ENCODE measurements at regions of chr11 and their contacts with region 1.

Region 1: GRCh38 chr11:97461934-97462333 is 1072.1 kb downstream of the JRKL start:
- DNase-seq: peak in 1 of 10 donors; percentile 21
- H3K4me3 ChIP-seq: no peak overlapping the region
- H3K27ac ChIP-seq: no peak overlapping the region
- H3K27me3 ChIP-seq: no peaks in the 10 kb centered on the region
- CTCF ChIP-seq: no peak

Region 2: GRCh38 chr11:97502201-97502600 is 40.3 kb after region 1 on chr11:
- intact Hi-C with region 1: no loop called
- DNase-seq: no peak
- H3K4me3 ChIP-seq: no peak overlapping the region
- H3K27ac ChIP-seq: no peak overlapping the region
- H3K27me3 ChIP-seq: no peaks in the 10 kb centered on the region
- CTCF ChIP-seq: no peak

Region 3: DNA sequence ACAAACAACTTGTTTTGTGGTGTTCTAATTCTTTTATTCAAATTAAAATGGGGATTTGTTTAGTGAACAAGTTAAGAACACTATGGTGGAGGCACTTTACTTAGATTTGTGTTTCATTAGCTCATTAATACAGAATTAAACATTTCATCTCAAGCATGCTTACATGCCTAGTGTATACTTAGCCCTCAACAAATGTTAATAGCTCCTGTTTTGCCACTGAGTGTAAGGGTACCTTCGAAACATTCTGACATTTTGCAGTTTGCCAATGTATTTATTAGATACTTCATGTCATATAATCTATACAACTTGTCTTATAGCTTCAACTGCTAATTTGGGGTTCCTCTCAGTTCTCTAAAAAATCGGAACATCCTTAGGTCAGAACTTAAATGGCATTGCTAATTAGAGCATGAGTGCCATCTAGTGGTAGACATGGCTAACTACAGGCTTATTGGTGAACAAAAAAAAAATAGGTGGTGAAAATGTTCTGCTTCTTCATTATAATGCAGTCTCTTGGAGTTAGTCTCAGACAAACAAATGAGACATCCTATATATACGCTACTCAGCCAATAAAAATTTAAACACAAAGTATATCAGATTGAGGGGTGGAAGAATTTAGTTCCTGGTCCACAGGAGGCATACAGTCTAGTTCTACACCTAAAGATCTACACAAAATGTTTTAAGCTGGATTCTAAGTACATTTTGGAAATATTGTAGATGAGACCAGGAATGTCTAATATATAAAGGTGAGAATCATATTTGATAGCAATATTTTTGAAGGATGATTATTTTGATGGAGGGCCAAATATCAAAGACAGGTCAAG is 1553.9 kb after region 1 on chr11:
- intact Hi-C with region 1: loop called in 1 of 2 experiments (anchors 10 kb)
- DNase-seq: no peak
- H3K4me3 ChIP-seq: no peak overlapping the region
- H3K27ac ChIP-seq: no peak overlapping the region
- H3K27me3 ChIP-seq: peaks cover 0 to 2% (median 0%) of the 10 kb centered on the region in 45 donors
- CTCF ChIP-seq: peak; percentile 77 to 100 (median 90)

Measured in dorsolateral prefrontal cortex (tissue), 120 donors.